Calu3 (cell line): ENCODE measurements at regions of chr10 and their contacts with region 1.

Region 1: DNA sequence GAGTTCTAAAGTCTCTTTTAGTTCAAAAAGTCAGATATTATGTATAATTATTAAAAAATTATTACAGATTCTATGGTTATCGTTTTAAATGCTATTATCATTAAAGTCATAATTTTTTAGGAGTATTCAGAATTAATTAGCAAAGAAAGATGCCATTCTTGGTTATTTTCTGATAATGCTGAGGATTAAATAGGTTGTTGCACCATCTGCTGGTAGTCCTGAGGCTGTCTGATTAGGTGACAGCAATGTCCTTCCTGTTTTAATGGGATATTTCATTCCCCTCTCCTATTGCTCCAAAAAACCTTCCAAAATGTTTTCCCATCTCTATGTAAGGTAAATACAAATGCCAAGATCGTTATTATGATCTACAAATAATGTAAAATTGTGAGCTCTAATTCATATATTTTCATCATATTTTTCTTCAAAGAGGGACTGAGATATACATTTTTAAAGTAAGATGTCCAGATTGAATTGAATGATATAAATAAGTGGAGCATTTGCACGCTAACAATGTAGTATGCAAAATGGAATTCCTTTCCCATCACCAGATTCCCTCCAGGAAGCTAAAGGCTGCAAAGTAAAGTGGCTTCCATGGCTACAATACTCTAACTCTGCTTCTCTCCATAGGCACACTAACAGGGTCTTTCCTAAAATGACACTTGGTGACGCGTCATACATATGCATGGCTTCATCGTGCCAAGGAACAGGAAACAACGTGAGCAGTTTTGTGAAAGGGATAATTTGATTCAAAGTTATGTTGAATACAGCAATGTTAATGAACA is 58.8 kb upstream of the AKR1E2 start:
- DNase-seq: peak; percentile 30
- H3K4me3 Mint-ChIP-seq: no peak overlapping the region
- H3K27ac Mint-ChIP-seq: peak overlapping the region; percentile 89
- H3K4me1 Mint-ChIP-seq: peaks cover 75% of the 10 kb centered on the region
- H3K27me3 Mint-ChIP-seq: no peaks in the 10 kb centered on the region
- CTCF ChIP-seq: peak; percentile 25

Region 2: GRCh38 chr10:3197348-3198003 is 1569.7 kb before region 1 on chr10:
- CTCF ChIA-PET with region 1: interaction called, 6 read pairs
- intact Hi-C with region 1: loop called (anchors 2 kb)
- DNase-seq: peak; percentile 87
- H3K4me3 Mint-ChIP-seq: peak overlapping the region; percentile 68
- H3K27ac Mint-ChIP-seq: peak overlapping the region; percentile 49
- H3K4me1 Mint-ChIP-seq: peaks cover 17% of the 10 kb centered on the region
- H3K27me3 Mint-ChIP-seq: peaks cover 24% of the 10 kb centered on the region
- CTCF ChIP-seq: peak; percentile 85

Region 3: GRCh38 chr10:4131407-4132228 is 635.6 kb before region 1 on chr10:
- CTCF ChIA-PET with region 1: no interaction called
- intact Hi-C with region 1: loop called (anchors 5 kb)
- DNase-seq: no peak
- H3K4me3 Mint-ChIP-seq: no peak overlapping the region
- H3K27ac Mint-ChIP-seq: no peak overlapping the region
- H3K4me1 Mint-ChIP-seq: no peaks in the 10 kb centered on the region
- H3K27me3 Mint-ChIP-seq: no peaks in the 10 kb centered on the region
- CTCF ChIP-seq: no peak

Region 4: GRCh38 chr10:4391683-4392082 is 375.5 kb before region 1 on chr10:
- CTCF ChIA-PET with region 1: no interaction called
- intact Hi-C with region 1: loop called (anchors 10 kb)
- DNase-seq: peak; percentile 46
- H3K4me3 Mint-ChIP-seq: no peak overlapping the region
- H3K27ac Mint-ChIP-seq: no peak overlapping the region
- H3K4me1 Mint-ChIP-seq: peaks cover 7% of the 10 kb centered on the region
- H3K27me3 Mint-ChIP-seq: no peaks in the 10 kb centered on the region
- CTCF ChIP-seq: no peak

Region 5: GRCh38 chr10:4663162-4663904 is 103.9 kb before region 1 on chr10:
- CTCF ChIA-PET with region 1: interaction called, 4 read pairs
- intact Hi-C with region 1: loop called (anchors 2 kb)
- DNase-seq: peak; percentile 84
- H3K4me3 Mint-ChIP-seq: peak overlapping the region; percentile 25
- H3K27ac Mint-ChIP-seq: peak overlapping the region; percentile 98
- H3K4me1 Mint-ChIP-seq: peaks cover 30% of the 10 kb centered on the region
- H3K27me3 Mint-ChIP-seq: no peaks in the 10 kb centered on the region
- CTCF ChIP-seq: no peak

Region 6: GRCh38 chr10:4725917-4726606 is 41.2 kb before region 1 on chr10:
- CTCF ChIA-PET with region 1: interaction called, 15 read pairs
- intact Hi-C with region 1: loop called (anchors 2 kb)
- DNase-seq: no peak
- H3K4me3 Mint-ChIP-seq: peak overlapping the region; percentile 53
- H3K27ac Mint-ChIP-seq: peak overlapping the region; percentile 95
- H3K4me1 Mint-ChIP-seq: peaks cover 34% of the 10 kb centered on the region
- H3K27me3 Mint-ChIP-seq: no peaks in the 10 kb centered on the region
- CTCF ChIP-seq: no peak